ENCODE measurements at regions of chr17 and their contacts with region 1.

Region 1: DNA sequence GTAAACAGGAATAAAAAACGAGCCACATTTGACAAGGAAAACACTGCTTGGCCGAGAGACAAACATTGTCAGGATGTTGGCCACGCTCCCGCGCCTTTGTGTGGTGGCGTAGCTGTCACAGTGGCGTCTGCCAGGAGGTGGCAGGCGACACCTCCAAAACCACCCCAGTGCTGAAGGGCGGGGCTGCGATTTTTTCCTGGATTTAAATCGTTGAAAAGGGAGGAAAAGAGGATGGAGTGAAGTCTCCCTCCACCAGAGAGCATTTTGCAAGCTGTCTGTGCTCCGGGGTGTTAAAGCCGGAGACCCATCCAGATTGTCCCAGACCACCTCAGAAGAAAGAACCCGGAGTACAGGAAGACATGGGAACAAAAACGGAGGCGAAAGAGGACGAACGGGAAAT is 12.7 kb downstream of the MRM3 start:
- DNase-seq: peak; percentile 88

Region 2: GRCh38 chr17:693791-694638 is 100.9 kb before region 1 on chr17:
- intact Hi-C with region 1: no loop called
- DNase-seq: no peak

Region 3: DNA sequence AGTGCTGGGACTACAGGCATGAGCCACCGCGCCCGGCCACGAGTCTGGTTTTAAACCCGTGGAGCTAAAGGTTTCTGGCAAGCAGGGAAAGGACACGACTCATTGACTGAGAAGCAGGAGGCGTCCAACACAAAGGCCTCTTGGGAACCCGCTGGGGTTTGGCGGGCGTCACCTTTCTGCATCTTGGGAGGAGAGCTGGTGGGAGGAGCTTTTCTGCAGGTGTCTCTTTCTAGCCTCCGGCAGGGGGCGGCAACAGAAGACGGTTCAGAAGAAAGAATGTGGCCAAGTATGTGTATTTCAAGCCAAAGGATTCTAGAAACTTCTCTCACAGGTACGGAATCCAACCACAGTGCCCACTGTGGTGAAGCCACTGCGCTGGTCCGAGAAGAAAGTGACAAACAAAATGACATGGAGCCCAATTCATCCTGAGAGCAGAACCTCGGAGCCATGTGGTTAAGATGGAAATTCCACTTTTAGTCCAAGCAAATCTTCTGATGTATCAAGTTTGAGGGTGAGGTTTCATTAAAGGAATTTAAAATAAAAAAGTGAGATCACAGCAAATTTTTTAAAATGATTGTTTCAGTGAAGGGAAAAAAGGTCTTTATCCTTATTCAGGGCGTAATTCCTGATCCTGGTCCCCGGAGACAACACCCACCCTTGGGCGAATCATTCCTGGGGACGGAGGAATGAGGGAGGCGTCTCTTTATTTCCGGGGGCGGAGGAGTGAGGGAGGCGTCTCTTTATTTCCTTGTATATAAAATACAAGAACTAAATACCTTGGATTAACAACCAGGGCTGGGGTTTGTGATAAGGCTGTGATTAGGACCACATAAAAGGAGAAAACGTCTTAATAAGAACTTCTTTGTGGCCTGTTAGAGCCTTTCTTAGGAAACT is 84.9 kb after region 1 on chr17:
- intact Hi-C with region 1: loop called (anchors 5 kb)
- DNase-seq: peak; percentile 85

Region 4: DNA sequence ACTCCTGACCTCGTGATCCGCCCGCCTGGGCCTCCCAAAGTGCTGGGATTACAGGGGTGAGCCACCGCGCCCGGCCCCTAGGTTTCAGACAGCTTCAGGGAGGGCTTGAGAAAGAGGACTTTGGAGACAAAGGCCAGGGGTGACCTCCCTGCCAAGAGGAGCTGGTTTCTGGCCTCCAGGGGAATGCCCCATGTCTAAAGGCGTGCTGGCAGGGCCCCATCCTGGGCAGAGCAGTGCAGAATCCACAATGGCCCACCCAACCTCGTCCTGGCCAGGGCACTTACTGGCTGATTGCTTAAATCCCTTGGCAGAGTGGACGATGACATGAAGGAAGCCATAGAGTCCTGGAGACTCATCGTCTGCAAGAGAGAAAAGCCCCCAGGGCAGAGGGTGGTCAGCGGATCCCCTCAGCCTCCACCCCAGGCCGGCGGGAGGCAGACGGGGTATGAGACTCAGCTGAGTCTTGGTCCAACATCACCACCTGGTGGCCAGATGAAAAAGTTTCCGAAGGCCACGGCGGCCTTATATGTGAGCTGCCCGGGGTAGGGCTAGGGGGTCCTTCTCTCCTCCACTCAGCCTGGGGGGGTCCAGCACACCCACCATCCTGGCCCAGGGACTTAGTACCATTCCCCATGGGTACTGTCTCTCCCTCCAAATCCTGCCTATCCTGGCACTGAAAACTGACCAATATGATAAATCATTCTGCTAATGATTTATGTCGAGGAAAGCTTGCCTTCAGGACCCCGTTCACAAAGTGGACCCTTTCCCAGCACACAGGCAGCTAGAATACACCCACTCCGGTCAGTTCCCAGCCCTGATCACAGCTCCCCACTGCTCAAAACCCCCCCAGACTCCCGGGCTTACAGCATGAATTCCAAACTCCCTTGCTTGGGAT is 261.1 kb after region 1 on chr17:
- intact Hi-C with region 1: loop called (anchors 5 kb)
- DNase-seq: no peak

Measured in cardiac septum (tissue), 1 donor.